ENCODE measurements at regions of chr12 and their contacts with region 1.

Region 1: DNA sequence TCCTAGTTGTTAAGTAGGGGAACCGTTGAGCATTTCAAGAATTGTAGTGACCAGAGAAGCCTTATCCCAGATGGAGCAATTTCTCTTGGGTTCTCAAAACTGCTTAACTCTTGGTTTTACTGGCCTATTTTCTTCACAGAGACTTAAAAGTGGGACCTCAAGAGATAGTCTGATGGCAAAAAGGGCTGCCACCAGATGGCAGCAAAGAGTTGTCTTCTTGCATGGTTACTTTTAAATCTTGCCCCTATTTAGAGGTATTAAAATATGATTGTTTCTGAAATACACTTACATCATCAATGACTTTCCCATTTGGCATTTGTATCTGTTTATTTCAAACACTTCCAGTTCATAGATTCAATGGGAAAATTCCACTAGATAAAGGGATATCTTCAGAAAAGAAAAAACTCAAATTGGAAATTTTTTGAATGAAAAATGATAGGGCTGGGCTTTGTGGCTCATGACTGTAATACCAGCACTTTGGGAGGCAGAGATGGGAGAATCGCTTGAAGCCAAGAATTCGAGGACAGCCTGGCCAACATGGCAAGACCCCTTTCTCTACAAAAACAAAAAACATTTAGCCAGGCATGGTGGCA is 69.9 kb upstream of the CNTN1 start:
- DNase-seq: peak in 1 of 2 donors; percentile 54
- ATAC-seq: no peak

Region 2: DNA sequence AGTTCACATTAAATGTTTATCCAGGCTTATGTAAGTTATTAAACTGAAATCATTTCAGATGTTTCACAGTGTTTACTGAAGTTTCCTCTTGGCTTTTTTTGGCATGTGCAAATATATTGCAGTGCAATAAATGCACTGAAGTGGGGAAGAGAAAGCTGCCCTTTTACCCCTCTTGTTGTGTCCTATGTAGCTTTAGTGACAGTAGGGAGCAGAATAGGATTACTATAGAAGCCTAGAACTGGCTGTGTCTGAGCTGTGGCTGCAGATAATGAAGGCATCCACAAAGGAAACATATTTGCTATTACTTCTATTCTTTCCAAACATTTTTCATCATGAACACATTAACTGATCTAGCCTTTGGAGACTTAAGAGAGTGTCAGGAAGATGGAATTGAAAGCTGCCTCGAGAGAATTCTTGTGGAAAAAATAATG is 45.8 kb after region 1 on chr12:
- intact Hi-C with region 1: no loop called
- DNase-seq: no peak
- ATAC-seq: no peak

Region 3: GRCh38 chr12:40921563-40922163 is 299.3 kb after region 1 on chr12:
- intact Hi-C with region 1: loop called in 1 of 2 experiments (anchors 5 kb)
- DNase-seq: no peak
- ATAC-seq: no peak

Measured in left colon (tissue), 2 donors.